ENCODE measurements at regions of chr7 and their contacts with region 1.

Region 1: GRCh38 chr7:13850185-13850752 is 139.2 kb downstream of the ETV1 start:
- DNase-seq: peak; percentile 97
- ATAC-seq: peak; percentile 90
- H3K4me3 ChIP-seq: no peak overlapping the region
- H3K27ac ChIP-seq: peak overlapping the region; percentile 95
- H3K4me1 ChIP-seq: peaks cover 49% of the 10 kb centered on the region
- H3K27me3 ChIP-seq: no peaks in the 10 kb centered on the region
- CTCF ChIP-seq: no peak

Region 2: DNA sequence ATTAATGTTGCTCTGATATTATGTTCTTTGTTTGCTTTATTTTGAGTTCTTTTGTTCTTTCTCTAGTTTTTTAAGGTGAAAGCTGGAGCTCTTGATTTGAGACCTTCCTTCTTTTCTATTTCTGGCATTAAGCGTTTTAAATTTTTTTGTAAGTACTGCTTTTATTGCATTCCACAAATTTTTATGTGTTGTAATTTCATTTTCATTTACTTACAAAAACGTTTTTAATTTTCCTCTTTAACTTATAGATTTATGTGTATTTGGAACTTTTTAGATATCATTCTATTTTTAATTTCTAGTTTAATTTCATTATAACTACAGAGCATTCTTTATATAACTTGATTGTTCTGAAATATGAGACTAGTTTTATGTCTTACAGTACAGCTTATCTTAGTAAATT is 256.4 kb before region 1 on chr7:
- CTCF ChIA-PET with region 1: no interaction called
- POLR2A ChIA-PET with region 1: no interaction called
- intact Hi-C with region 1: no loop called
- DNase-seq: no peak
- ATAC-seq: no peak
- H3K4me3 ChIP-seq: no peak overlapping the region
- H3K27ac ChIP-seq: no peak overlapping the region
- H3K4me1 ChIP-seq: no peaks in the 10 kb centered on the region
- H3K27me3 ChIP-seq: no peaks in the 10 kb centered on the region
- CTCF ChIP-seq: no peak

Region 3: DNA sequence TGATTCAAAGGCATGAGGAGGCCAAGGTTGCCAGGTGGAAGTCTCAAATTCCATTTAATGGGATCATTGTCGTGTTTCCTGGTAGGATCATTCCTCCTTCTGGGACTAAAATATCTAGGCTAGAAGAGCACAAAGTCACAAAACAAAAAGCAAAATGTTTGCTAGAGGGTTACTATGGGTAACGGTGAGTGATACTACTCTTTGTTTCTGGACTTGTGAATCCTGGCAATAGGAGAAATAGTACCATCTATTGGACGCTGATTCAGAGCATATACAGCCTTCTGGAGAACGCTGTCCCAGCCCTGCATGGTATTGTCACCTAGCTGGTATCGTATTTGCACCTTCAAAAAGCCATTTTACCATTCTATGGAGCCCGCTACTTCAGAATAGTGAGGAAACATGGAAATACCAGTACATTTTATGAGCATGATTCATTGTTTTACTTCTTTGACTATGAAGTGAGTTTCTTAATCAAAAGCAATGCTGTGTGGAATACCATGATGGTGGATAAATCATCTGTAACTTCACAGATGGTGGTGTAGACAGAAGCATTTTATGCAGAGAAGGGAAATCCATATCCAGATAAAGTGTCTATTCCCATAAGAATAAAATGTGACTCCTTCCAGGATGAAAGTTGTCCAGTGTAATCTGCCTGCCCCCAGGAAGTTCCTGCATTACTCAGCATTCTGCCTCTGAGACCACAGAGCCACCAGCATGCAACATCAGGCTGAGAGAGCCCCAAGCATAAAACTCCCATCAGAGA is 221.8 kb before region 1 on chr7:
- CTCF ChIA-PET with region 1: no interaction called
- POLR2A ChIA-PET with region 1: no interaction called
- intact Hi-C with region 1: loop called (anchors 5 kb)
- DNase-seq: peak; percentile 65
- ATAC-seq: peak; percentile 70
- H3K4me3 ChIP-seq: no peak overlapping the region
- H3K27ac ChIP-seq: peak overlapping the region; percentile 90
- H3K4me1 ChIP-seq: peaks cover 24% of the 10 kb centered on the region
- H3K27me3 ChIP-seq: no peaks in the 10 kb centered on the region
- CTCF ChIP-seq: no peak

Region 4: DNA sequence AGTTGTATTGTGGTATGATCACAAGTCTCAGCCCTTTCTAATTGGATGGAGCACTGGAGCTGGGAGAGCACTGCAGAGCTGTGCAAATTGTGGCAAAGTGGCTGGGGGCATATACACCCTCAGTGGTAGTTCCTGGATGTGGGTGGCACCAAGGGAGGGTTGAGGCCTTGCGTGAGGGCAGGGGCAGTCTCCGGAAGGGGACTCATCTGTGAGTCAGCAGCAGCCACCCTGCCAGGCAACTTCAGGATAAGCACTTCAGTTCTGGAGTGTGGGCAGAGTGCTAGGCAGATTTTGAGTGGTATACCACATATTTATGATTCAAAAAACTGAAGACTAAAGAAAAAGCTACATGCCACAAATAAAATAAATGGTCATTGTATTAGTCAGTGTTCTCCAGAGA is 71.3 kb before region 1 on chr7:
- CTCF ChIA-PET with region 1: no interaction called
- POLR2A ChIA-PET with region 1: interaction called, 3 read pairs
- intact Hi-C with region 1: loop called (anchors 2 kb)
- DNase-seq: peak; percentile 92
- ATAC-seq: peak; percentile 95
- H3K4me3 ChIP-seq: no peak overlapping the region
- H3K27ac ChIP-seq: peak overlapping the region; percentile 95
- H3K4me1 ChIP-seq: peaks cover 26% of the 10 kb centered on the region
- H3K27me3 ChIP-seq: no peaks in the 10 kb centered on the region
- CTCF ChIP-seq: no peak

Region 5: DNA sequence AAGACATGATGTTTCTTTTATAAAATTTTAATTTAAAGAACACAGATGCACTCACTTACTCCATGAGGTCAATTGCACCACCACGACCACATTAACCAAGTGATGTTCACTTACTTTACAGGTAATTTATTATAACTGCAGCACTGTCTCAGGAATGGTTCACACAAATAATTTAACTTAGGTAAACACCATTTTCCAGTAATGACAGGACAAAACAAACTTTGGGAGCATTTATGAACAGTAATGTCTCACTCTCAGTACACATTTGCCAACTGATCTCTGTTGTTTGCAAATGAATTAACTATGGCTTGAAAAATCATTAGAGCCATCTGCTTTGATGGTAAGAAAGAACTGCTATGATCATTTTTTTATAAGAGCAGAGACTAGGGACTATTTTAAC is 11.2 kb before region 1 on chr7:
- CTCF ChIA-PET with region 1: no interaction called
- POLR2A ChIA-PET with region 1: interaction called, 3 read pairs
- intact Hi-C with region 1: loop called (anchors 1 kb)
- DNase-seq: peak; percentile 32
- ATAC-seq: peak; percentile 88
- H3K4me3 ChIP-seq: no peak overlapping the region
- H3K27ac ChIP-seq: peak overlapping the region; percentile 68
- H3K4me1 ChIP-seq: peaks cover 10% of the 10 kb centered on the region
- H3K27me3 ChIP-seq: no peaks in the 10 kb centered on the region
- CTCF ChIP-seq: no peak

Region 6: GRCh38 chr7:13981070-13981469 is 130.8 kb after region 1 on chr7:
- CTCF ChIA-PET with region 1: no interaction called
- POLR2A ChIA-PET with region 1: no interaction called
- intact Hi-C with region 1: loop called (anchors 1 kb)
- DNase-seq: peak; percentile 91
- ATAC-seq: peak; percentile 95
- H3K4me3 ChIP-seq: no peak overlapping the region; the same call in 1 of the 2 replicates
- H3K27ac ChIP-seq: peak overlapping the region; percentile 55
- H3K4me1 ChIP-seq: peaks cover 38% of the 10 kb centered on the region
- H3K27me3 ChIP-seq: no peaks in the 10 kb centered on the region
- CTCF ChIP-seq: no peak